A549 (cell line): ENCODE measurements at regions of chr17 and their contacts with region 1.

Region 1: DNA sequence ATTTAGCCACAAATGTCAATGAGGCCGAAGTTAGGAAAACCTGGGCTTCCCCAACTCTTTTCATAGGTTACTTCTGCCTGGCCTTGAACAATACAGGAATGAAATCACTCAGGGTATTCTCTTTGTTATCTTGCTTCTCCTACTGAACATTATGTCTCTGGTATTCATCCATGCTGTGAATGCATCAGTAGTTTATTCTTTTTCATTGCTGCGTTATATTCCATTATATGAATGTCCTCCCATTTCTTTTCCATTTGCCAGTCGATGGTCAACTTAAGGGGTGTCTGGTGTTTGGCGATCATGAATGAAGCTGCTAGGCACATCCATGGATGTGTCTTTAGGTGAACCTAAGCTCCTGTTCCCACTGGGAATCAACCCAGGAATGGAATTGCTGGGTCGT is 128.3 kb downstream of the CRLF3 start:
- DNase-seq: no peak
- ATAC-seq: no peak
- H3K4me3 ChIP-seq: no peak overlapping the region
- H3K27ac ChIP-seq: peak overlapping the region; percentile 76 to 84; a peak in 5 of 6 replicates
- H3K4me1 ChIP-seq: peaks cover 40% of the 10 kb centered on the region
- CTCF ChIP-seq: no peak
- EP300 ChIP-seq: no peak
- POLR2A ChIP-seq: no peak
- RAD21 ChIP-seq: no peak

Region 2: DNA sequence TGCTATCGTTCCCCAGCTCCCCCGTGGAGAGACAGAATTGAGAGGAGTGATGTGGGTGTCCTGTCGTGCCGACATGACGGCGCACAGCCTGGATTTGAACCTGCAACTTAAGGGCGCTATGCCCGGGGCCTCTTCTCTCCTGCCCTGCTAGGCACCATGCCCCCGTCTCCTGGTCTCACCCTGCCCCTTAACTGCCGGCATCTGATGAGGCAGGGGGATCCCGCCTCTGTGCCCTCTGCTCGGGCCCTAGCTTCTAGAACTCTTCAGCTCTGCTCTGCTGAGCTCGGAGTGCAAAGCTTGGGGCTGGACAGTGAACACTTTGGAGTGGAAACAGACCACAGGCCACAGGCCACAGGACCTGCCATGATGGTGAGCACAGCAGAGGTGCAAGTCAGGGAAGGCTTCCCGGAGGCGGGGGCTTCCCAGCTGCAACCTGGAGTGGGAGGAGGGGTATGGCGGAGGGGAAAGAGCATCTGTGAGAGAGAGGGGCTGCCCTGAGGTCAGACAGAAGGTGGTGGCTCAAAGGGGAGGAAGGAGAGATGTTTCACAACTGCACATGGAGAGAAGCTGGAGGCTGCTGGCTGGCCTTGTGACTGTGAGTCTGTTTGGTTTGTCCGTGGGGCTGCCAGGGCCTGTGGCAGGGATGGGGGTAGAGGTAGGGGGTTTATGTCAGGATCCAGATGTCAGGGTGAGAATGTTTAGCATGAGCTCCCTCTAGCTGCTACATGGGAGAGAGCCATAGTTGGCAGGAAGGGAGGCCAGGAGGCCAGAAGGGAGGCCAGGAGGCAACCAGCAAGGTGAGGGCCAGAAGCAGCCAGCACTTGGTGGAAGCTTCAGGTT is 20.4 kb after region 1 on chr17:
- CTCF ChIA-PET with region 1: interaction called, 17 read pairs
- POLR2A ChIA-PET with region 1: no interaction called
- DNase-seq: peak in 1 of 2 experiments; percentile 69
- ATAC-seq: peak; percentile 17 to 38; a peak in 4 of 6 replicates
- H3K4me3 ChIP-seq: no peak overlapping the region
- H3K27ac ChIP-seq: no peak overlapping the region
- H3K4me1 ChIP-seq: no peaks in the 10 kb centered on the region
- CTCF ChIP-seq: peak; percentile 46; the same call in 2 of the 3 replicates
- EP300 ChIP-seq: no peak
- POLR2A ChIP-seq: no peak
- RAD21 ChIP-seq: peak; percentile 52 to 54; a peak in 4 of 5 replicates

Region 3: DNA sequence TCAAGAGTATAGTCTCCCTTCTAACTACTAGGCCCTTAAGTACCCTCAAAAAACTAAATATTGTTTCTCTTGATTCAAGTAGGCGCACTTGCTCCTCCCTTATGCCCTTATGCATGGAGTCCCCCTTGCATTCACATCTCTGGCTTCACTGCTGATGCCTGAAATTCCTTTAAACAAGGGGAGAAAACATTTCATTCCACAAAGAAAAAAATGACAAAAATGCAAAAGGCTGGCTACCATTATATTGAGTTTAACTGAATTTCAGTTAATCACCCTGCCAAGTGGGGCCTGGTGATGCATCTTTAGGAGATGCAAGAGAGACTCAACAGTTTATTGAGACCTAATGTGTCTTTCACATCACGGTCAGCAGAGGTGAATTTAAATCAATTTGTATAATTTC is 92.7 kb after region 1 on chr17:
- CTCF ChIA-PET with region 1: no interaction called
- POLR2A ChIA-PET with region 1: no interaction called
- DNase-seq: no peak
- ATAC-seq: no peak
- H3K4me3 ChIP-seq: no peak overlapping the region
- H3K27ac ChIP-seq: no peak overlapping the region
- H3K4me1 ChIP-seq: peaks cover 19% of the 10 kb centered on the region; the same call in 2 of the 3 replicates
- CTCF ChIP-seq: no peak
- EP300 ChIP-seq: no peak
- POLR2A ChIP-seq: no peak
- RAD21 ChIP-seq: no peak